Activated B cell treated with CpG ODN at 0.5 μM for 24 hours (primary cell): ENCODE measurements at regions of chr19 and their contacts with region 1.

Region 1: GRCh38 chr19:41872775-41873647 is 4.1 kb upstream of the CD79A start:
- DNase-seq: peak; percentile 63
- ATAC-seq: no peak
- H3K4me3 Mint-ChIP-seq: peak overlapping the region; percentile 47
- H3K27ac Mint-ChIP-seq: peak overlapping the region; percentile 98
- H3K4me1 Mint-ChIP-seq: peaks cover 88% of the 10 kb centered on the region
- H3K27me3 Mint-ChIP-seq: no peaks in the 10 kb centered on the region
- CTCF ChIP-seq: peak; percentile 22

Region 2: DNA sequence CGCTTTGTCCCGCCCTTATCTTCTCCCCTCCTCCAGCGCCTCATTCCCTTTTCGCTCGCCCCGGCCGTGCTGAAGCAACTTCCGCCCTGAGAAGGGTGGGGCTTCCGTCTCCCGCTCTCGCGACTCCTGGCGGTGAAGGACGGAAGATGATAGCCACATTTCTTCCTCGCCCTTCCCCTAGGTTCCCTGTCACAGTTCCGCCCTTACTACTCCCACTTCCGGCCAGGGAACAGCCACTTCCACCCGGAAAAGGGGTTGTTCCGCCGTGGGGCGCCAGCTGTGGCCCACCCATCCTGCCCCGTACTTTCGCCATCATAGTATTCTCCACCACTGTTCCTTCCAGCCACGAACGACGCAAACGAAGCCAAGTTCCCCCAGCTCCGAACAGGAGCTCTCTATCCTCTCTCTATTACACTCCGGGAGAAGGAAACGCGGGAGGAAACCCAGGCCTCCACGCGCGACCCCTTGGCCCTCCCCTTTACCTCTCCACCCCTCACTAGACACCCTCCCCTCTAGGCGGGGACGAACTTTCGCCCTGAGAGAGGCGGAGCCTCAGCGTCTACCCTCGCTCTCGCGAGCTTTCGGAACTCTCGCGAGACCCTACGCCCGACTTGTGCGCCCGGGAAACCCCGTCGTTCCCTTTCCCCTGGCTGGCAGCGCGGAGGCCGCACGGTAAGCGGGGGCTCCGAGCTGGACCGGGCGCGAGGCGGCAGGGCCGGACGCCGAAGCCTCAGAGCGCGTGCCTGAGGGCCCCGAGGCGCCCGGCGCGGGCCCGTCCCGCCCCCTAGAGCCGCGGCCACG is 13.2 kb before region 1 on chr19 and contains the start of gene RPS19:
- CTCF ChIA-PET with region 1: interaction called, 34 read pairs
- POLR2A ChIA-PET with region 1: interaction called, 258 read pairs
- intact Hi-C with region 1: loop called (anchors 1 kb)
- DNase-seq: peak; percentile 98
- ATAC-seq: peak; percentile 85
- H3K4me3 Mint-ChIP-seq: peak within 1 kb of the TSS; percentile 94
- H3K27ac Mint-ChIP-seq: peak within 1 kb of the TSS; percentile 97
- H3K4me1 Mint-ChIP-seq: peaks cover 44% of the 10 kb centered on the region
- H3K27me3 Mint-ChIP-seq: no peaks in the 10 kb centered on the region
- CTCF ChIP-seq: no peak
- total RNA-seq, gene RPS19: 4,196 and 4,853 TPM in 2 replicates

Region 3: GRCh38 chr19:41895745-41896580 is 23.0 kb after region 1 on chr19:
- CTCF ChIA-PET with region 1: interaction called, 4 read pairs
- POLR2A ChIA-PET with region 1: interaction called, 11 read pairs
- intact Hi-C with region 1: no loop called
- DNase-seq: no peak
- ATAC-seq: no peak
- H3K4me3 Mint-ChIP-seq: no peak overlapping the region
- H3K27ac Mint-ChIP-seq: peak overlapping the region; percentile 57
- H3K4me1 Mint-ChIP-seq: peaks cover 13% of the 10 kb centered on the region
- H3K27me3 Mint-ChIP-seq: no peaks in the 10 kb centered on the region
- CTCF ChIP-seq: no peak

Region 4: GRCh38 chr19:41928221-41928683 is 55.2 kb after region 1 on chr19 and contains the start of gene ERFL:
- CTCF ChIA-PET with region 1: interaction called, 13 read pairs
- POLR2A ChIA-PET with region 1: interaction called, 44 read pairs
- intact Hi-C with region 1: no loop called
- DNase-seq: no peak
- ATAC-seq: peak; percentile 35
- H3K4me3 Mint-ChIP-seq: no peak within 1 kb of the TSS
- H3K27ac Mint-ChIP-seq: peak within 1 kb of the TSS; percentile 73
- H3K4me1 Mint-ChIP-seq: peaks cover 35% of the 10 kb centered on the region
- H3K27me3 Mint-ChIP-seq: peaks cover 2% of the 10 kb centered on the region
- CTCF ChIP-seq: no peak
- total RNA-seq, gene ERFL: 0.64 and 1.1 TPM in 2 replicates

Region 5: GRCh38 chr19:41945135-41945766 is 72.2 kb after region 1 on chr19:
- CTCF ChIA-PET with region 1: interaction called, 66 read pairs
- POLR2A ChIA-PET with region 1: interaction called, 189 read pairs
- intact Hi-C with region 1: loop called (anchors 1 kb)
- DNase-seq: peak; percentile 67
- ATAC-seq: peak; percentile 82
- H3K4me3 Mint-ChIP-seq: peak overlapping the region; percentile 72
- H3K27ac Mint-ChIP-seq: peak overlapping the region; percentile 98
- H3K4me1 Mint-ChIP-seq: peaks cover 73% of the 10 kb centered on the region
- H3K27me3 Mint-ChIP-seq: no peaks in the 10 kb centered on the region
- CTCF ChIP-seq: no peak

Region 6: DNA sequence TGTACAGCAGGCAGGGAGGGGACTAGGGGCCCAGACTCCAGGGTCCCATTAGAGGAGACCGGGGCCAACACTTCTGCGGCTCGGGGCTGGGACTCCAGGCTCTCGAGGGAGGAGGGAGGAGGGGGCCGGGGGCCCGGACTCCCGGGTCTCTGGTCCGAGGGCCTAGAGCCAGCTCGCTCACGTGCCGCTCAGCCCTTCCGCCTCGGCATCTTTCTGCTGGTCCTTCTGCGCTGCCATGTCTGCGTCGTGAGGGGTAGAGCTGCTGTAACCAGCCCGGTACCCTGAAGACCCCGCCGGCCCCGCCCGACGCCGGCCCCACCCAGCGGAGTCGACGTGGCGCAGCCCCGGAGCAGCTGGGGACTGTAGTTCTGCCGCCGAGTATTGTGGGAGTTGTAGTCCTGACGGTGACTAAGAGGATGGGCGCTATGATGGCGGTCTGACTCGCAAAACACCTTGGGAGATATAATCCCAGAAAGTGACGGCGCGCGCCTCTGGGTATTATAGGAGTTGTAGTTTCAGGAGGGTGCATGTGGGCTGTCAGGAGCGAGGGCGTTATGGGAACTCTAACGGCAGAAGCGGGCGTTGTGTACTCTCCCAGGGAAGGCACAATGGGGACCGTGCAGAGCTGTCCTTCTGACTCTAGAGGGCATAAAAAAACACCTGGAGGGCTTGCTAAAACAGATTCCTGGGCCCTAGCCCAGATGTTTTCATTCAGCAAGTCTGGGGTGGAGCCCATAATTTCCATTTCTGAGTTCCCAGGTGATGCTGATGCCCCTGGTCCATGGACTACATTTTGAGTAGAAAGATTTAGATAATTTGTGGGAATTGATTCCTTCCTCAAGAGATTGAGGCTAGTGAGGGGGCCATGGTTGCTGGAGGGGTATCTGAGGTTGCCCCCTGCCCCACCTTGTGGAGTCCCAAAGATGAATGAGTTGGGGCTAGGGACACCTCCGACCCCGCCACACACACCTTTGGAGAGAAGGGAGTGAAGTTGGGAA is 86.3 kb after region 1 on chr19 and contains the start of gene RABAC1:
- CTCF ChIA-PET with region 1: interaction called, 23 read pairs
- POLR2A ChIA-PET with region 1: interaction called, 18 read pairs
- intact Hi-C with region 1: loop called (anchors 2 kb)
- DNase-seq: peak; percentile 79
- ATAC-seq: peak; percentile 91
- H3K4me3 Mint-ChIP-seq: peak within 1 kb of the TSS; percentile 90
- H3K27ac Mint-ChIP-seq: peak within 1 kb of the TSS; percentile 90
- H3K4me1 Mint-ChIP-seq: peaks cover 17% of the 10 kb centered on the region
- H3K27me3 Mint-ChIP-seq: no peaks in the 10 kb centered on the region
- CTCF ChIP-seq: no peak
- total RNA-seq, gene RABAC1: 96.7 and 102 TPM in 2 replicates

Region 7: DNA sequence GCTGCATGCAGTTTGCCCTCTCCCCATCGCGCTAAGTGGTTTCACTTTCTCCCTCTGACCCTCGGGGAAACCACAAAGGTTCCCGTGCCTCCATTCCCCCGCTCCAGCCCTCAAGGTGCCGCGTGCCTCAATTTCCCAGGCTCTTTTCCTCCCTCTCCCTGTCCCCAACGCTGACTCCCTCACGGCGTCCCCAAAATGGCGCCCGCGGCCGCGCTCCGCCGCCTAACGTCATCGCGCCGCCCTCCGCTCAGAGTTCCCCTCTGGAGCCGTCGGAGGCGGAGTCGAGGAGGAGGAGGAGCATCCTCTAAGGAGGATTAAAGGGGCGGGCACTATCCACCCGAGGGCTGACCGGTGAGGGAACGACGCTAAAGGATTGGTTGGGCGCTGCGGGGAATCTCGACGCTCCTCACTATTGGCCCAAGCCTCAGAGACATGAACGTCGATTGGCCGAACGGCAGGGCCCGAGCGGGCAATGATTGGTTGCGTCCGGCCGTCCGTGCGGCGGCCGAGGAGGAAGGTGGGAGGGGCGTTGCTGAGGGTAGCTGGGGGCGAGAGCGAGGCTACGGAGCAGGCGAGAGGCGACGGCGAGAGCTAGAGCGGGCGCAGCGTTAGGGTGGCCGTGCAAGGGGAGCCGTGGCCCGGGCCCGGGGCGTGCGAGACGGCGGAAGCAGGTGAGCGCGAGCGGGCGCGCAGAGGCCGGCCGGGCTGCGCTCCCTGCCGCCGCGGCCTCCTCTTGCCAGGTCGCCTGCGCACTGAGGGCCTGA is 202.8 kb after region 1 on chr19 and contains the start of gene ZNF574:
- CTCF ChIA-PET with region 1: no interaction called
- POLR2A ChIA-PET with region 1: no interaction called
- intact Hi-C with region 1: loop called (anchors 5 kb)
- DNase-seq: peak; percentile 91
- ATAC-seq: peak; percentile 95
- H3K4me3 Mint-ChIP-seq: peak within 1 kb of the TSS; percentile 93
- H3K27ac Mint-ChIP-seq: peak within 1 kb of the TSS; percentile 99
- H3K4me1 Mint-ChIP-seq: peaks cover 37% of the 10 kb centered on the region
- H3K27me3 Mint-ChIP-seq: no peaks in the 10 kb centered on the region
- CTCF ChIP-seq: no peak
- total RNA-seq, gene ZNF574: 27.7 and 29.6 TPM in 2 replicates